Activated CD4-positive, alpha-beta memory T cell treated with anti-CD3 and anti-CD28 coated beads, Interleukin-2, amount 10 ng/mL, durations not matched to agents 7 days and 5 days (primary cell): ENCODE measurements at regions of chr6 and their contacts with region 1.

Region 1: GRCh38 chr6:11232193-11232769 is at the start of gene NEDD9:
- DNase-seq: peak; percentile 97
- H3K4me3 Mint-ChIP-seq: peak within 1 kb of the TSS; percentile 86
- H3K27ac Mint-ChIP-seq: peak within 1 kb of the TSS; percentile 99
- H3K4me1 Mint-ChIP-seq: peaks cover 70% of the 10 kb centered on the region
- H3K27me3 Mint-ChIP-seq: no peaks in the 10 kb centered on the region
- total RNA-seq, gene NEDD9: 60.1 to 64.8 TPM

Region 2: DNA sequence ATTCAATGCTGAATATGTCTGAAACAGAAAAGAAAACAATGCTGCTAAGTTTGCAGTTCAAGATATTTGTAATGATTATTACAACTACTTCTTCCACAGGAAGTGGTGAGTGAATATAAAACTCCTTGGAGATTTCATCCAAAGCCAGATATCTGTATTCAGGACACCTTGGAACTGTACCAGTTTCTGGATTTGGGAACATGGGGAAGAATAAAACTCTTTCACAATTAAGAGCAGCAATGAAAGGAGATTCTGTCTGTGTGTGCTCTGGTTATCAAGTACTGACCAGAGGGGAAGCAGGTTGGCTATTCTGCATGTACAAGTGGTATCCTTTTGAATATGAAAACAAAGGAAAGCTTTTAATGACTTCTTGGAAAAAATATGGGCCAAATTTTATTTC is 209.2 kb before region 1 on chr6:
- CTCF ChIA-PET with region 1: no interaction called
- POLR2A ChIA-PET with region 1: no interaction called
- DNase-seq: no peak
- H3K4me3 Mint-ChIP-seq: no peak overlapping the region
- H3K27ac Mint-ChIP-seq: no peak overlapping the region
- H3K4me1 Mint-ChIP-seq: no peaks in the 10 kb centered on the region
- H3K27me3 Mint-ChIP-seq: peaks cover 46% of the 10 kb centered on the region

Region 3: DNA sequence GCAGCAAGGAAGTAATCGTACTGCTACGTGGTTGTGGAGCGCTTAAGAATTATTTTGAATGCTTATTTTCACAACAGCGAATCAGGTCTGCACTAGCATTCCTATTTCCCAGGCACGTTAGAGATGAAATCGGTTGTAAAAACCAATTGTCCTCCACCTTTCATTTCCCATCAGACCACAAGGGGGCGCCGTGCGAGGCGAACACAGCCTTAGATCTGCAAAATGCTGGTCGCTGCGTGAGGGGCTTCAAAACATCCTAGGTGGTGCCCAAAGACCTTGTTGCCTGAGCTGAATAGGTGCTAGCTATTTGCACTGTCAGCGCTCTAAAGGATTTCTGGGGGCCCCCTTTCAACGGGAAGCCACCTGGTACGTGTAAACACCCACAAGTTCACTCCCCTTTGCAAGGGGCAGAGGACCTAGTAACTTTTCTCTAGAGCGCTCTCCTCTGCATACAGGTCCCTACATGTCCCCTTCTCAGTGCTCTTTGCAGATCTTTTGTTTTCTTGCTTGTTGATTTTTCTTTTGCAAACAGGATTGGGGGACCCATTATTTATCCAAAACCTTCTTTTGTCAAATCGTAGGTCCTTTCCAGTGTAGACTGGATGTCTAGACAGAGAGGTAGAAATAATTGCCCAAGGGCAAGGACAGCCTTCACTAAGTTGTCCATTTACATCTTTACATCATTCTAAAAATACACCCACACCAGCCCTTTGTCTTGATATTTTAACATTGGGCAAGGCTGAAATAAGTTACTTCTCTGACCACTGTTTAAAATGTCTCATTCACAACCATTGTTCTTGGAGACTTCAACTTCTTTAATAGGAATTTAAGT is 59.6 kb before region 1 on chr6:
- CTCF ChIA-PET with region 1: interaction called, 14 read pairs
- POLR2A ChIA-PET with region 1: interaction called, 3 read pairs
- DNase-seq: peak; percentile 77
- H3K4me3 Mint-ChIP-seq: no peak overlapping the region
- H3K27ac Mint-ChIP-seq: no peak overlapping the region
- H3K4me1 Mint-ChIP-seq: peaks cover 10% of the 10 kb centered on the region
- H3K27me3 Mint-ChIP-seq: no peaks in the 10 kb centered on the region

Region 4: GRCh38 chr6:11207199-11207968 is 24.9 kb before region 1 on chr6:
- CTCF ChIA-PET with region 1: interaction called, 5 read pairs
- POLR2A ChIA-PET with region 1: interaction called, 42 read pairs
- DNase-seq: no peak
- H3K4me3 Mint-ChIP-seq: no peak overlapping the region
- H3K27ac Mint-ChIP-seq: no peak overlapping the region
- H3K4me1 Mint-ChIP-seq: peaks cover 57% of the 10 kb centered on the region
- H3K27me3 Mint-ChIP-seq: no peaks in the 10 kb centered on the region

Region 5: DNA sequence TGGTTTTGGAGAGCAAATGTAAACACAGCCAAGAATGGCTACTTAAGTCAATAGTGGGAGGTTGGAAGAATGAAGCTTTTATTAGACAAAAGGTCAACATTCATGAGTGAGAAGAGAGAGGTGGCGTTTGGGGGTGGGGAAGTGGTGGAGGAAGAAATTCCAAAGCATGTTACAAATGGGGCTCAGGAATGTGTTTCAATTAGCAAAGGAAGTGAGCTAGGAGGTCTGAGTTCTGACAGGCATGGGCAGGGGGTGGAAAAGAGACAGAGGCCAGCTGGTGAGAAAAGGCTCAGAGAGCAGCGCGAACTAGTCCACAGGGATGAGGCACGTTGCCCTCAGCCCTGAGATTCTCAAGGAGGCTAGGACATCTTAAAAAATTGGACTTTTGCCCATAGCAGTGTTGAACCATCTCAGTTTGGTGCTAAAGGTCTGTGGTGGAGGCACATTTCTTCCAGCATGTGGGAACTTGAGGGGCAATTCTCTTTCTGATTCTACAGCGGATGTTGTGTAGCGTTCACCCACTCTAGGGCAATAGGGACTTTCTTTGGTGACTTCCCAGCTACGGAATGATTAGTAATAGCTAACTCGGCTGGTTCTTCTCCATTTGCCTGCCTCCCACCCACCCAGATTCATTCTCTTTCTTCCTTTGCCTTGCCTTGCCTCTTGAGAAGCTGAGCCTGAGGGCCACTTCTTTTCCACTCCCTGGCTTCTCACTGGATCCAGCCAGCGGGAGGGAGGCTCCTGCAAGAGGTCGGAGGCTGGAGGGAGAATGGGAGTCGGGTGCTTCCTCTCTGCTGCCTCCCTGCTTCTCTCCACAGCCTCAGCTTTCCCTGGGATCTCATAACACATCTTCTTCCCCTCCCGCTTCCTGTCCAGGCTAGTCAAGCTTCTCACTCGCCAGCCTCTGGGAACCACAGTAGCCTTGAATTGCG is 45.3 kb after region 1 on chr6:
- CTCF ChIA-PET with region 1: no interaction called
- POLR2A ChIA-PET with region 1: interaction called, 17 read pairs
- DNase-seq: no peak
- H3K4me3 Mint-ChIP-seq: peak overlapping the region; percentile 12
- H3K27ac Mint-ChIP-seq: peak overlapping the region; percentile 75
- H3K4me1 Mint-ChIP-seq: peaks cover 43% of the 10 kb centered on the region
- H3K27me3 Mint-ChIP-seq: no peaks in the 10 kb centered on the region

Region 6: DNA sequence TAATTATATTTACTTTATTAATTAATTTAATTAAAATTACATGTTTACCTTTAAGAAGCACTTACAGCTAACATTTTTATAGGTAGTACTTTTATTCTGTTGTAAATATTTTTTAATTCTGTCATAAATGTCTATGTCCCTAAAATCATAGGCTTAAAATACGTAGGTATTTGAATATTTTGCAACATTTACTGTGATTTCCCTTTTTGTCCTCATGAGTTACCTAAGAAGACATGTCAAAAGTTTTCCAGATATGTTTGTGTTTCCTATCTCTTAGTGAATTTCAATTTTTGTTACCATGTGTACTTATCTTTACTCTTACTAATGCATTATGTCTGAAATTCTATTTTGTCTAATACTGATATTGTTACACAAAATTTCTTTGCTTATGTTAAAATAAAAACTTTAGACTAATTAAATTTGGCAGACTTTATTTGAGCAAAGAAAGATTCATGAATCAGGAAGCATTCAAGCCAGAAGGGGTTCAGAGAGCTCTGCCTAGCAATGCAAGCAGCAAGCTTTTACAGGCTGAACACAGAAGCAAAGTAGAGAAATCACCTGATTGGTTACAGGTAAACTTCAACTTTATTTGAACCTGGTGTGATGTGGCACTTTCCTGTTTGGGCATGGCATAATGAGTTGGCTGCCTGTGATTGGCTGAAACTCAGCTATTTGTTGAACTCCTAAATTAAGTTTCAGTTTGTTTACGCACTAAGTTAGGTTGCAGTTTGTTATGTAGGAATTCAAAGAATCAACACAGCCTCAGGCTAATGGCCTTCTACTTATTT is 182.1 kb after region 1 on chr6:
- CTCF ChIA-PET with region 1: interaction called, 3 read pairs
- POLR2A ChIA-PET with region 1: interaction called, 77 read pairs
- DNase-seq: peak; percentile 76
- H3K4me3 Mint-ChIP-seq: peak overlapping the region; percentile 8
- H3K27ac Mint-ChIP-seq: peak overlapping the region; percentile 59
- H3K4me1 Mint-ChIP-seq: peaks cover 55% of the 10 kb centered on the region
- H3K27me3 Mint-ChIP-seq: no peaks in the 10 kb centered on the region